ENCODE measurements at regions of chr17 and their contacts with region 1.

Region 1: GRCh38 chr17:19648475-19649406 is at the start of gene ALDH3A2:
- DNase-seq: peak; percentile 97 to 99 (median 99)
- H3K4me3 ChIP-seq: peak within 1 kb of the TSS; percentile 26 to 79 (median 51)
- H3K27ac ChIP-seq: peak within 1 kb of the TSS; percentile 88 to 97 (median 95)
- H3K4me1 ChIP-seq: peaks cover 47 to 59% of the 10 kb centered on the region in 2 donors
- H3K27me3 ChIP-seq: no peaks in the 10 kb centered on the region
- CTCF ChIP-seq: peak in 4 of 6 experiments; percentile 13 to 29 (median 24)
- POLR2A ChIP-seq: peak; percentile 92 to 99
- total RNA-seq, gene ALDH3A2: 312 to 1,009 (median 470) TPM

Region 2: DNA sequence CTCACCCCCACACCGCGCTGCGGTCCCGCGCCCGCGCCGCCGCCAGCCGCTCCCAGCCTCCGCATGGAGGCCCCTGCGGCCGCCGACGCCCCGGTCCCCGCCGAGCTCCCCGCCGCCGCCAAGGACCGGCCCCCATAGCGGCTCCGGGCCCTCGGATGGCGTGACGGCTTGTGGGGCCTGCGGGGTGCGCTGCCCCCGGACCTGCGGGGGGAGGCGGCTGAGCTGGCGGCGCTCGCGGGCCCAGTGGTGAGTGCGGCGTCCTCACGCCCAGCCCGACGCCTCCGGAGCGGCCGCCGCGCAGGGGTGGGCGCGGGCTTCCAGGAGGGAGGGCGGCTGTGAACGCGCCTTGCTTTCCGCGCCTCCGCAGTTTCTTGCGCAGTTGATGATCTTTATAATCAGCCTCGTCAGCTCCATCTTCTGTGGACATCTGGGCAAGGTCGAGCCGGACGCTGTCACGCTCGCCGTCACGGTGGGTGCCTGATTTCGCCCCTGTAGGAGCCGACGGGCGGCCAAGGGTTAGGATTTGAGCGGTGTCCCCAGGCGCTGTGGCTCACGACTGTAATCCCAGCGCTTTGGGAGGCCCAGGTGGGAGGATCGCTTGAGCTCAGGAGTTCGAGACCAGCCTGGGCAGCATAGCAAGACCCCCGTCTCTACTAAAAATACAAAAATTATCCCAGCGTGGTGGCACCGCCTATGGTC is 68.7 kb before region 1 on chr17:
- intact Hi-C with region 1: loop called in 1 of 2 experiments (anchors 10 kb)
- DNase-seq: peak in 6 of 7 donors; percentile 43 to 65 (median 48)
- H3K4me3 ChIP-seq: peak overlapping the region in 2 of 4 donors; percentile 22 to 68
- H3K27ac ChIP-seq: peak overlapping the region in 4 of 5 donors; percentile 15 to 94 (median 82)
- H3K4me1 ChIP-seq: peaks cover 0 to 4% of the 10 kb centered on the region in 2 donors
- H3K27me3 ChIP-seq: no peaks in the 10 kb centered on the region
- CTCF ChIP-seq: peak in 1 of 6 experiments; percentile 0
- POLR2A ChIP-seq: peak in 1 of 2 donors; percentile 38

Region 3: DNA sequence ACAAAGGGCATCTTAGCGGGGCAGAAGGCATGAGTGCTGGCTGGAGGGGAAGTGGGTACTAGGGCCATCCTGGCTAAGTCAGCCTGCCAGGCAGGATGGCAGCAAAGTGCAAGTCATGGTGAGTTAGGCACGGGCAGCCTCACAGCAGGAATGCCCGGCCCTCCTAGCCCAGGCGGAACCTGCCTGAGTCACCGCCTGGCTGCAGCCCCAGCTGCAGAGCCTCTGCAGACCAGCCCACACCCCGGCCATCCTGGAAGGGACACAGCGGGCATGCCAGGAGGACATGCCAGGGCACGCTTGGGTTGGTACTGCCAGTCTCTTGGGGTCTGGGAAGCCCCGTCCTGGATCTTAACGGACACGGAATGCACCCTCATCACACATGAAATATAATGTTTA is 104.3 kb after region 1 on chr17:
- intact Hi-C with region 1: loop called in 1 of 2 experiments (anchors 5 kb)
- DNase-seq: peak; percentile 81 to 95 (median 92)
- H3K4me3 ChIP-seq: no peak overlapping the region
- H3K27ac ChIP-seq: peak overlapping the region in 4 of 5 donors; percentile 60 to 94 (median 82)
- H3K4me1 ChIP-seq: peaks cover 13 to 15% of the 10 kb centered on the region in 2 donors
- H3K27me3 ChIP-seq: no peaks in the 10 kb centered on the region
- CTCF ChIP-seq: peak in 1 of 6 experiments; percentile 9
- POLR2A ChIP-seq: peak in 1 of 2 donors; percentile 68

Region 4: GRCh38 chr17:19812407-19812806 is 163.7 kb after region 1 on chr17:
- intact Hi-C with region 1: no loop called
- DNase-seq: no peak
- H3K4me3 ChIP-seq: no peak overlapping the region
- H3K27ac ChIP-seq: no peak overlapping the region
- H3K4me1 ChIP-seq: no peaks in the 10 kb centered on the region
- H3K27me3 ChIP-seq: no peaks in the 10 kb centered on the region
- CTCF ChIP-seq: peak in 1 of 6 experiments; percentile 17
- POLR2A ChIP-seq: no peak